Calu3 (cell line): ENCODE measurements at regions of chr4 and their contacts with region 1.

Region 1: DNA sequence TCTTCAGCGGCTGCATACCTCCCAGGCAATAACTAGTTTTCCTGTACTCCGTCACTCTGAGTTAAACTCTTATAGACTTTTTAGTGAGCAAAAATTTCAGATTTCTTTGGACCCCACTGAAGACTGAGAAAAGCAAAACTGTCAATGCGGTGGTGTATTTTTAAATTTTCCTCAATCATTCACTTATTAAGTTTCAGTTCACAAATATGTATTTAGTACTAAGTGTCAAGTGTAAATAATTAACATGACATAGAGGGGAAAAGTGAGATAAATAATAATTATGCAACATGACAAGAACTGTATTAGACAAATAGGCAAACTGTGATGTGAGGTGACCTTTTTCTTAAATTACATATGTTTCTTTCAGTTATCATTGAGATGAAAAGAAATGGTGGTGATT is 124.4 kb downstream of the NAF1 start:
- DNase-seq: no peak
- H3K4me3 Mint-ChIP-seq: no peak overlapping the region
- H3K27ac Mint-ChIP-seq: no peak overlapping the region
- H3K4me1 Mint-ChIP-seq: no peaks in the 10 kb centered on the region
- H3K27me3 Mint-ChIP-seq: no peaks in the 10 kb centered on the region
- CTCF ChIP-seq: no peak

Region 2: DNA sequence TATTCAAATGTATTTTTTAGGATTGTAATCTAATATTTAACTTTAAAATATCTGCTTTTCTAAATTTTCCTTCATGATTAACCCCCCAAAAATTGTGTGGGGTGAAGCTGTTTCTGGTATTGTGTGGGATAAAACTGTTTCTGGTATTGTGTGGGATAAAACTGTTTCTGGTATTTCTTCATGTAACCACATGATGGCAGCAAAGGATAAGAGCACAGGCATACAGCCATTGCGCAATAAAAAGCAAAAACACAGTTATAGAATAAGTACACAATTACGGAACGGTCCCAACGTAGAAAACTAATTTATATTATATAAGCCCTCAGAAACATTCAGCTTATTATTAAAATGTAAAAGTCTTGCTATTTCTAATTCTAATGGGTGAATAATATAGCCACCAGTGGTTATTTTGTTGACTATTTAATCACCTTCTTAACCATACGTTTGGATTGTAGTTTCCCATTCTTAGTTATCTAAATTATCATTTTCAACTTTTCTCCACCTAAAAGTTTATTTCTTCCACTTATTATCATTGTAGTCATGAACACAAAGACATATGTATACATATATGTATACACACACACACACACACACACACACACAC is 544.6 kb before region 1 on chr4:
- CTCF ChIA-PET with region 1: interaction called, 4 read pairs
- intact Hi-C with region 1: loop called (anchors 1 kb)
- DNase-seq: no peak
- H3K4me3 Mint-ChIP-seq: no peak overlapping the region
- H3K27ac Mint-ChIP-seq: no peak overlapping the region
- H3K4me1 Mint-ChIP-seq: no peaks in the 10 kb centered on the region
- H3K27me3 Mint-ChIP-seq: no peaks in the 10 kb centered on the region
- CTCF ChIP-seq: peak; percentile 61

Region 3: GRCh38 chr4:162645381-162645780 is 396.9 kb before region 1 on chr4:
- CTCF ChIA-PET with region 1: no interaction called
- intact Hi-C with region 1: loop called (anchors 5 kb)
- DNase-seq: no peak
- H3K4me3 Mint-ChIP-seq: no peak overlapping the region
- H3K27ac Mint-ChIP-seq: no peak overlapping the region
- H3K4me1 Mint-ChIP-seq: no peaks in the 10 kb centered on the region
- H3K27me3 Mint-ChIP-seq: no peaks in the 10 kb centered on the region
- CTCF ChIP-seq: no peak